AG04450 (cell line): ENCODE measurements at regions of chr2 and their contacts with region 1.

Region 1: DNA sequence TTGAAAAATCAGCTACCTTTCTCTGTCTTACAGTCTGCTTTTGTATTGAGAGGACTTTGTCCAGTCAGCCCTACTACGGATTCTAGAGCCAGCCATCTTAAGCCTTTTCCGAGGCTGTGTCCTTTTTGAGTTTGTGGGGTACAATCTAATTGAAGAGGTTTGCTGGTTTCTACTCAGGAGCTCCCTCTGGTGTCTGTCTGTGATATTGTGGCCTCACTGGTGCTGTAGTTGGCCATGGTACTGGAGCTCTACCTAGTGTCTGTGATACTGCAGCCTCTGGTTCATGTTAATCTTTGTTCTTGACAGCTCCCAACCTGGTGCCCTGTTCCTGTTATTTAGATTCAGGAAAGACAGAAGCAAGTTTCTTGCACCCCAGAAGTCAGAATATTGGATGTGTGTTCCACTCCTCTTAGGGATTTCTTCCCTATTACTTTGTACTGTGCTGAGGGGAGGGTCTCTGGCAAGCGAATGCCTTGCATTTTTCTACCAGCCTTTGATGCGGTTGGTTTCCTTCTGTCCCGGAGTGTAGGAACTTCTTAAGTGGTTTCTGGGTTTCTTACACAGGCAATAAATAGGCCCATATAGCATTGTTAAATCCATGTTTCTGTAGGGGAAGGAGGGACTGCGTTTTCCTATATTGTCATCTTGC is 78.5 kb downstream of the ACSL3 start:
- DNase-seq: no peak
- H3K4me3 ChIP-seq: no peak overlapping the region
- H3K27ac ChIP-seq: no peak overlapping the region
- H3K27me3 ChIP-seq: no peaks in the 10 kb centered on the region
- CTCF ChIP-seq: peak; percentile 83

Region 2: GRCh38 chr2:222805541-222806304 is 133.6 kb before region 1 on chr2:
- CTCF ChIA-PET with region 1: no interaction called
- POLR2A ChIA-PET with region 1: no interaction called
- DNase-seq: no peak
- H3K4me3 ChIP-seq: no peak overlapping the region
- H3K27ac ChIP-seq: no peak overlapping the region
- H3K27me3 ChIP-seq: no peaks in the 10 kb centered on the region
- CTCF ChIP-seq: no peak

Region 3: DNA sequence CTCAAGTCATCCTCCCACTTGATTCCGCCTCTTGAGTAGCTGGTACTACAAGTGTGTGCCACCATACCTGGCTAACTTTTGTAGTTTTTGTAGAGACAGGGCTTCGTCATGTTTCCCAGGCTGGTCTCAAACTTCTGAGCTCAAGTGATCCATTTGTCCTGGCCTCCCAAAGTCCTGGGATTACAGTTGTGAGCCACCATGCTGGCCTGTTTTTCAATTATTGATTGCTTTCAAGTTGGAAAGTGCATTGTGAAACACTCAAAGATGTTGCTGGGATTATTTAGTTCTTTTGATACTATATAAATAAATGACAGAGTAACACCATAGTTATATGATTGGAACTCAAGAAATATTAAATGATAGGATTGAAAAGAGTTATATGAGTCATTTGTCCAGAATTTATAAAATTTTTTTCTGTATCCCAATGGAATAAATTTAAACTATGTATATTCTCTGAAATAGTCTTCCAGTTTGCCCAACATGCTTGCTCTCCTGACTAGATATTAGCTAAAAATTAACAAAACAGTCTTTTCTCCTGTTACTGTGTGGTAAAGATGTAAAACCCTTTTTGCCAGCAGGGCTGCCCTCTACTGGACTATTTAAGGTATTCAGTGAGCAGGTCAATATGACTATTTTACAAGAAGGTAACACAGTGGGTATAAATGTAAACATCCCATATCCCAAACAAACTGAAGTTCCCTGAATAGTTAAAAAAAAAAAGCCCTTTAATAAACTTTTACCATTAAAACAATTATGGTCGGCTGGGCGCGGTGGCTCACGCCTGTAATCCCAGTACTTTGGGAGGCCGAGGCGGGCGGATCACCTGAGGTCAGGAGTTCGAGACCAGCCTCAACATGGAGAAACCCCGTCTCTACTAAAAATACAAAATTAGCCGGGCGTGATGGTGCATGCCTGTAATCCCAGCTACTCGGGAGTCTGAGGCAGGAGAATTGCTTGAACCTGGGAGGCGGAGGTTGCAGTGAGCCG is 35.8 kb before region 1 on chr2:
- CTCF ChIA-PET with region 1: interaction called, 12 read pairs
- POLR2A ChIA-PET with region 1: no interaction called
- DNase-seq: no peak
- H3K4me3 ChIP-seq: no peak overlapping the region
- H3K27ac ChIP-seq: peak overlapping the region; percentile 77
- H3K27me3 ChIP-seq: no peaks in the 10 kb centered on the region
- CTCF ChIP-seq: peak; percentile 67

Region 4: GRCh38 chr2:222915092-222915957 is 24.0 kb before region 1 on chr2:
- CTCF ChIA-PET with region 1: interaction called, 25 read pairs
- POLR2A ChIA-PET with region 1: no interaction called
- DNase-seq: no peak
- H3K4me3 ChIP-seq: no peak overlapping the region
- H3K27ac ChIP-seq: no peak overlapping the region
- H3K27me3 ChIP-seq: no peaks in the 10 kb centered on the region
- CTCF ChIP-seq: peak; percentile 61

Region 5: DNA sequence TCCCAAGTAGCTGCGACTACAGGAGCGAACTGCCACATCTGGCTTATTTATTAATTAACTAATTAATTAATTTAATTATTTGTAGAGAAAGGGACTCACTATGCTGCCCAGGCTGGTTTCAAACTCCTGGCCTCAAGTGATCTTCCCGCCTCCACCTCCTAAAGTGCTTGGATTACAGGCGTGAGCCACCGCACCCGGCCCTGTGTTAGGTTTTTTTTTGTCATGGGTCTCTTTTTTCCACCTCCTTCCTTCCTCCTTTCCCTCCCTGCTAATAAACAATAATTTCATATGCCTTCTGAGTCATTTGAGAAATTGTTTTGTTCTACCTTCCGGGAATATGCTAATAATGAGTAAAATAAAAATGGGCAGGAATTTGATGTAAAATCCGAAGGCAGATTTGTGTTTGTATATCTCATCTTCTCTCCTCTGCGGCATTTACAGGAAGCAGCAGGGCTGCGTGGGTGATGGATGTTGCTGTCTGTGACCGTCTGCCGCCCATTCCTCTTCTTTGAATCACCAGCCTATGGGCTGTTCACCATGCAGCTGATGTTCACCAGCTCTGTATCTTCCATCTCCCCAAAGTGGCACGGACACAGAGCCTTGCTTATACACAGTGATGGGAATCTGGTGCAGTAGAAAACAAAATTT is 11.4 kb after region 1 on chr2:
- CTCF ChIA-PET with region 1: interaction called, 26 read pairs
- POLR2A ChIA-PET with region 1: no interaction called
- DNase-seq: peak; percentile 76
- H3K4me3 ChIP-seq: no peak overlapping the region
- H3K27ac ChIP-seq: peak overlapping the region; percentile 75
- H3K27me3 ChIP-seq: no peaks in the 10 kb centered on the region
- CTCF ChIP-seq: no peak

Region 6: DNA sequence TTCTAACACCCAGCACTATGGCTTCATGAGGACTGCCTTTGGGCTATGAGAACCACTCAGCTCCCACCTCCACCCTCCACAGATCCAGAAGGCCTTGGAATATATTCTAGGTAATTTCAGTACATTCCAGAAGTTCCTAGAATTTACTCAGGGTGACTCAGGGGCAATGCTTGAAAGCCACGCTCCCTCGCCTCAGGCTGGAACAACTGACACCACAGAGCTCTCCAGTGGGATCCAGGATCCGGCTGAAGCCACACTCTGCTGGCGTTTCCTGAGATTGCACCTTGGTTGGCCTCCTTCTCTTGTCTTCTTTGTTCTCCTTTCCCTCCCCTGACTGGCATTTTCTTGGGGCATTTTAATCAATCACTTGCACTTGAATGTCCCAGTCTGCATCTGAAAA is 20.0 kb after region 1 on chr2:
- CTCF ChIA-PET with region 1: interaction called, 26 read pairs
- POLR2A ChIA-PET with region 1: interaction called, 3 read pairs
- DNase-seq: peak; percentile 72
- H3K4me3 ChIP-seq: no peak overlapping the region
- H3K27ac ChIP-seq: peak overlapping the region; percentile 52
- H3K27me3 ChIP-seq: no peaks in the 10 kb centered on the region
- CTCF ChIP-seq: peak; percentile 55